PC-9 (cell line): ENCODE measurements at regions of chr4 and their contacts with region 1.

Region 1: GRCh38 chr4:173252024-173252935 is 81.9 kb downstream of the HMGB2 start:
- DNase-seq: peak; percentile 81 to 99
- H3K4me3 ChIP-seq: no peak overlapping the region
- H3K27ac ChIP-seq: peak overlapping the region; percentile 81
- H3K4me1 ChIP-seq: peaks cover 23% of the 10 kb centered on the region
- H3K27me3 ChIP-seq: no peaks in the 10 kb centered on the region
- CTCF ChIP-seq: no peak

Region 2: DNA sequence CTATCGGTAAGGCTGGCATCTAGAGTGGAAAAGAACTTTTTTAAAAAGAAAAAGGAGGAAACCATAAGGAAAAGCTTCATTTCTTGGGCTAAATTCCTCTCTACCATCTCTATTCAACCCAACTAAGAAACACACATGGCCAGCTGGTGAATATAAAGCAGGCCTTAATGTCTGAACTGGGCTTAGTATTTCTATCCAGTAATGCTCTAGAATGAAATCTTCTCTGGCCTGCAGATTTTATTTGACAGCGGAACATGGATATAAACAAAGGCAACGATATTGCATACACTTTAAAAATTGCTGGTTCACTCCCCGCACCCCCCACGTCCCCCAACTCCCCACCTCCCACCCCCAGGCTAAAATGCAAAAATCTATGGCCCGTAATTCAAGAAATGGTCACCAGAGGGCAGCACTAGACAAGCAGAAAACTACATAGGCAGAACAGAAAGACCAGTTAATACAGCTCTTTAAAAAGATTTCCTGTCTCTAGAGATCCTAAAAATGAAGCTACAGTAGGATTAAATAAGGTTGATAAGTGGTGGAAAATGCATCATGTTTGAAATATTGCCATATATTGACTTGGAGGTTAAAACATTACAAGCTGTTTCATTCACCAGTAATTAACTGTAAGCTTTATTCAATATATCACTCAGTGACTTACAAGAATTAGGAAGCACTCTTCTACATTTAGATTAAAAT is 238.9 kb before region 1 on chr4:
- CTCF ChIA-PET with region 1: interaction called, 20 read pairs
- POLR2A ChIA-PET with region 1: no interaction called
- intact Hi-C with region 1: loop called (anchors 1 kb)
- DNase-seq: peak in 1 of 2 experiments; percentile 41
- H3K4me3 ChIP-seq: no peak overlapping the region
- H3K27ac ChIP-seq: no peak overlapping the region
- H3K4me1 ChIP-seq: peaks cover 11% of the 10 kb centered on the region
- H3K27me3 ChIP-seq: no peaks in the 10 kb centered on the region
- CTCF ChIP-seq: peak; percentile 79

Region 3: DNA sequence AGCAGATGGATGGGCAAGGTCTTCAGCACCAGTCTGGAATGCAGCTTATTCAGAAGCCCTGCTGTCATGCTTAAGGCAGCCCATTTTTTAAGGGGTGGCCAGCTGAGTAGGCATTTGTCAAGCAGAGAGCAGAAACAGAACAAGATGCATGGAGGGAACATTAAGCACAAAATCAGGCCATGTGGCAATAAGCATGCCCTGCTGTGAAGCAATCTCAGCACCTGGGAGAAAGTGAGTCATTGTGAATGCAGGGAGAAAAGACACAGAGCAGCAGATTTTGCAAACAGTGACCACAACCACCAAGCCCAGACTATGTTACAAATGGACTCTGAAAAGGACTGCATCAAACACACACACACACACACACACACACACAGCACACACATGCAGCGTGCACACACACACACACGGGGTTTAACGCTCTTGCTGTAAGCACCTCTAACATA is 177.8 kb before region 1 on chr4:
- CTCF ChIA-PET with region 1: interaction called, 22 read pairs
- POLR2A ChIA-PET with region 1: no interaction called
- intact Hi-C with region 1: loop called (anchors 1 kb)
- DNase-seq: peak; percentile 49 to 89
- H3K4me3 ChIP-seq: no peak overlapping the region
- H3K27ac ChIP-seq: peak overlapping the region; percentile 79
- H3K4me1 ChIP-seq: peaks cover 31% of the 10 kb centered on the region
- H3K27me3 ChIP-seq: no peaks in the 10 kb centered on the region
- CTCF ChIP-seq: no peak

Region 4: DNA sequence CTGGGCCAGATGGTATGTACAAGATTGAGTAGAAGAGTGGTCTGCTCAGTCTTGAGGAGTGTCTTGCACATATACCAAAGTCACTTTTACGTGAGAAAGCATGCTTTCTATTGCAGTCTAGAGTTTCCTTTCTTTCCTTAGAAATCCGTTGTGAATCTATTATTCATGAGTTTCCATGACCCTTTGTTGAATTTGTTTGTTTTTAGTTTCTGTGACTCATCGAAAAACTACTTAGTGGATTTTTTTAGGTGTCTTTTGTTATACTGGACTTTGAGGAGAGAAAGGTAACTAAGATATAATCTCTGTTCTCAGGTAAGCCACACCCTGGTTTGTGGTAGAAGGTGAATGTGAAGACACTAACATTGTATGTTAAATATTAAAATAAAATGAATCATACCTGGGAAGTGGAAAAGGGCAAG is 60.6 kb before region 1 on chr4:
- CTCF ChIA-PET with region 1: no interaction called
- POLR2A ChIA-PET with region 1: interaction called, 3 read pairs
- intact Hi-C with region 1: loop called (anchors 1 kb)
- DNase-seq: peak in 1 of 2 experiments; percentile 97
- H3K4me3 ChIP-seq: no peak overlapping the region; the same call in 1 of the 2 replicates
- H3K27ac ChIP-seq: peak overlapping the region; percentile 95
- H3K4me1 ChIP-seq: peaks cover 26% of the 10 kb centered on the region
- H3K27me3 ChIP-seq: no peaks in the 10 kb centered on the region
- CTCF ChIP-seq: no peak

Region 5: DNA sequence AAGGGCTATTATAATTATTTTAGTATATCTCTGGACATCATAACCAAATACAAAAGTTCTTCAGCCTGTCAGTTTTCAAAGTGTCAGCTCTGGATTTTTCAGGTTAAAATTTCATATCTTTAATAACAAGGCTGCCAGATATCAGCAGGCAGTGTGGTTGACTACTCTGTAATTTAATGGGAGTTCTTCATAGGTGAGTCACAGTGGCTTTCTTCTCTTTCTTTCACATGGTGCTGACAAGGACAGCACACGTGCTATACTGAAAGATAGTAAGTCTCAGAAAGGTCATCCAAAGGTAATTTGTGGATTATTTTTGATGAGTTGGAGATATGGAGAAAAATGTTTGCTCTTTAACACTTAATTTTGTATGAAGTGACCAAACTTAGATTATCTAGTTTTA is 40.4 kb before region 1 on chr4:
- CTCF ChIA-PET with region 1: no interaction called
- POLR2A ChIA-PET with region 1: interaction called, 11 read pairs
- intact Hi-C with region 1: loop called (anchors 1 kb)
- DNase-seq: peak in 1 of 2 experiments; percentile 84
- H3K4me3 ChIP-seq: 0 out of 2 replicates have a peak overlapping the region, but pooled peaks have one; percentile 10
- H3K27ac ChIP-seq: peak overlapping the region; percentile 75
- H3K4me1 ChIP-seq: peaks cover 53% of the 10 kb centered on the region
- H3K27me3 ChIP-seq: no peaks in the 10 kb centered on the region
- CTCF ChIP-seq: no peak

Region 6: GRCh38 chr4:173218411-173219125 is 33.7 kb before region 1 on chr4:
- CTCF ChIA-PET with region 1: interaction called, 4 read pairs
- POLR2A ChIA-PET with region 1: interaction called, 9 read pairs
- intact Hi-C with region 1: loop called (anchors 1 kb)
- DNase-seq: peak; percentile 20 to 76
- H3K4me3 ChIP-seq: no peak overlapping the region
- H3K27ac ChIP-seq: peak overlapping the region; percentile 70
- H3K4me1 ChIP-seq: peaks cover 35% of the 10 kb centered on the region
- H3K27me3 ChIP-seq: no peaks in the 10 kb centered on the region
- CTCF ChIP-seq: no peak

Region 7: DNA sequence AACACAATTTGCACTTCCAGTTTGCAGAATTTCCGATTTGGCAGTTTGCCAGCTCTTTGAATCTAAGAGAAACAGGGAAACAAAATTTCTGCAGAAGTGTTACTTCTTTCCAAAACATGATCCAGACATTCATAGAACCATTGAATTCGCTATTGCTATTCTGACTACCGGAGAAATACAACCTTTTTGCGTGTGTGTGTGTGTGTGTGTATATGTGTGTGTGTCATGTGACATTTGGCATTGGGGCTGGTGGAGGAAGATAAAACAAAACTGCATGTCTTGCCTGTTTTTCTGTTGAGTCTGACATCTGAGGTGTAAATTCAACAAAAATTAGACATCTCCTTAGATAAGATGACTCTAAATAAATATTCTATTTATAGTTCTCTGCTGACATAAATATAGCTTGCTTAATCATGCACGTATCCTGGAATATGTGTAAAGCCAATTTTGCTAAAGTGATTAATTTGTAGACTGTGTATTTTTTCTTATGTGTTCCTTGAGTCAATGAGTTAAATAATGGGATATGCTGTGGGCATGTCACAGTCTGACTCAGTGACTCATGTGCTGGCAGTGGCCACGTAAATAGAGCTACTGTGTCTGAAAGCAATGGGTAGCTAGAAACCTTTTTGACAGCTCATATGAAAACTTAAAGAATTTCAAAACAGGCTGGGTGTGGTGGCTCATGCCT is 1171.1 kb after region 1 on chr4:
- CTCF ChIA-PET with region 1: no interaction called
- POLR2A ChIA-PET with region 1: interaction called, 11 read pairs
- intact Hi-C with region 1: no loop called
- DNase-seq: peak; percentile 29 to 36
- H3K4me3 ChIP-seq: no peak overlapping the region
- H3K27ac ChIP-seq: no peak overlapping the region
- H3K4me1 ChIP-seq: 0 out of 2 replicates have a peak, but pooled peaks cover 10% of the 10 kb centered on the region
- H3K27me3 ChIP-seq: no peaks in the 10 kb centered on the region
- CTCF ChIP-seq: no peak